HEK293T (cell line): ENCODE measurements at regions of chr12 and their contacts with region 1.

Region 1: GRCh38 chr12:116880817-116881324 is 370 bp downstream of the HRK start:
- DNase-seq: peak; percentile 70

Region 2: GRCh38 chr12:116703214-116703795 is 177.6 kb before region 1 on chr12:
- CTCF ChIA-PET with region 1: interaction called, 13 read pairs
- POLR2A ChIA-PET with region 1: interaction called, 7 read pairs
- DNase-seq: peak; percentile 78

Region 3: DNA sequence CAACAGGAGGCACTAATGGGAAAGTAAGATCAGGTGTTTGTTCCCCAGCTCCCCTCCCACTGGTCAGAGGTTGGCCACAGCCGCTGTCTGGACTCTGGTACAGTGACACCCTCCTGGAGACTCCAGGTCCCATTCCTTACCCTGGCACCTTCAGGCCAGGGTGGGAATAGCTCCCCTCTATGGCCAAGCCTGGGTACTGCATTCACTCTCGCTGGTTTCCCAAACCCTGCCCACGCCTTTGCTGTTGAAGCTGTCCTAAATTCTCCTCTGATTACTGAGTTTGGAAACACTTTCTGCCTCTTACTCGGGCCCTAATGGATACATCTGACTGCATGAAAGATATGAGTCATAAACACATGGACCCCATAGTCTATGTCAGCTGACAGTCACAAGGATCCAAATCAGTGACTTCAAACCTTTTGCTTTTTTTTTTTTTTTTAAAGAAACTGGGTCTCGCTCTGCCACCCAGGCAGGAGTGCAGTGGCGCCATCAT is 17.6 kb before region 1 on chr12:
- CTCF ChIA-PET with region 1: interaction called, 13 read pairs
- POLR2A ChIA-PET with region 1: interaction called, 7 read pairs
- DNase-seq: peak; percentile 69